HepG2 (cell line): ENCODE measurements at regions of chr11 and their contacts with region 1.

Region 1: DNA sequence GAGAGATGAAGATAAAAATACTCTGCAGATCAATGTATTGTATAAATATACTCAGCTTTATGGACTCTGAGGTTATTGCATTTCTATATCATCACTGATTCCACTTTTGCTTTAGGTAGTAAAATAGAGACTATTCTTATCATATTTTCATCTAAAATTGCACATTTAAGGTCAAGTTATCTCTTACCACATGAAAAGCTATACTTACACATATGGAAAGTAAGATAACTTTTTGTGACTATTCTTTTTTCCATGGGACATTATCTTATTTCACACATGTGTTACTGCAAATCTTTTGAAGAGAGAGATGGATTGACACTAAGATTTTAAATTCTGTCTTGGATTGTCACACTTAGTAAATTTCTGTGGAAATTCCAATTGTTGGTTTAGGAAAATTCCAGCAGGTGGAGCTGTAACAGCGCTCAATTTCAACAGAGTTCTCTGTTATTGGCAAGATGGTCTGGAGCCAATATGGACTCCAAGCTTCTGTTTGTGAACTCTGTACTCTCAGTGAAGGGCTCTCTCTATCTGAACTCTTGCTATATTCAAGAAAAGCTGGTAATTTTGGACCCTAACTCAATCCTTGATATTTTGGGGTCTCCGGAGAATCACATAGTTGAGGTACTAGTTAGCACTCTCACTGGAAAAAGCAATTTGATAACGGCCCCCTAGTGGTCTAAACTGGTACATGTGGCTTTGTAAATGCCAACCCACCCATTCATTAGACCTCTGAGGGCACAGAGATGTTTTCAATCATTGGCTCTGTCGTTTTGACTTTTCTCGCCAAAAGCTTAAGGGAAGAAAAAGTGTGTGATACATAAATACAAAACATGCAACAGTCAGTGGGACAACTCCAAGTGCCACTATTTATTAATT is 429.7 kb downstream of the ETS1 start:
- DNase-seq: peak; percentile 44
- ATAC-seq: peak; percentile 83
- H3K4me3 ChIP-seq: no peak overlapping the region
- H3K27ac ChIP-seq: no peak overlapping the region
- H3K4me1 ChIP-seq: no peaks in the 10 kb centered on the region
- H3K27me3 ChIP-seq: no peaks in the 10 kb centered on the region
- CTCF ChIP-seq: peak; percentile 41
- EP300 ChIP-seq: no peak
- POLR2A ChIP-seq: no peak
- RAD21 ChIP-seq: 0 out of 2 replicates have a peak, but pooled peaks have one; percentile 24

Region 2: DNA sequence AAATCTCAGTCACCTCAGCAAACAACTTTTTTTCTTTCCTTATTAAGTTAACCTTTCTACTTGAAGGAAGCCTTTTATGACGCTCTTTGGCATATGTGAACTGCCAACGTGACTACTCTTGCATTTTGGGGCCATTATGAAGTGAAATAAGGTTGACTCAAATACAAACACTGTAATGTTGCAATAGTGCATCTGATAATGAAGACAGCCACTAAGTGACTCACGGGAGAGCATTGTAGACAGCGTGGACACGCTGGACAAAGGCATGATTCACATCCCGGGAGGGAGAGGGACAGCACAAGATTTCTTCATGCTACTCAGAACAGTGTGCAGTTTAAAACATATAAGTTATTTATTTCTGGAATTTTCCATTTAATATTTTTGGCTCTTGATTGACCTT is 131.1 kb before region 1 on chr11:
- CTCF ChIA-PET with region 1: interaction called, 11 read pairs
- POLR2A ChIA-PET with region 1: no interaction called
- in situ Hi-C with region 1: no loop called
- intact Hi-C with region 1: loop called (anchors 1 kb)
- DNase-seq: no peak
- ATAC-seq: no peak
- H3K4me3 ChIP-seq: no peak overlapping the region
- H3K27ac ChIP-seq: no peak overlapping the region
- H3K4me1 ChIP-seq: no peaks in the 10 kb centered on the region
- H3K27me3 ChIP-seq: no peaks in the 10 kb centered on the region
- CTCF ChIP-seq: no peak
- EP300 ChIP-seq: no peak
- POLR2A ChIP-seq: no peak
- RAD21 ChIP-seq: no peak

Region 3: GRCh38 chr11:128222245-128222884 is 64.7 kb after region 1 on chr11:
- CTCF ChIA-PET with region 1: no interaction called
- POLR2A ChIA-PET with region 1: no interaction called
- in situ Hi-C with region 1: no loop called
- intact Hi-C with region 1: no loop called
- DNase-seq: no peak
- ATAC-seq: no peak
- H3K4me3 ChIP-seq: no peak overlapping the region
- H3K27ac ChIP-seq: no peak overlapping the region
- H3K4me1 ChIP-seq: no peaks in the 10 kb centered on the region
- H3K27me3 ChIP-seq: no peaks in the 10 kb centered on the region
- CTCF ChIP-seq: no peak
- EP300 ChIP-seq: no peak
- POLR2A ChIP-seq: no peak
- RAD21 ChIP-seq: no peak

Region 4: DNA sequence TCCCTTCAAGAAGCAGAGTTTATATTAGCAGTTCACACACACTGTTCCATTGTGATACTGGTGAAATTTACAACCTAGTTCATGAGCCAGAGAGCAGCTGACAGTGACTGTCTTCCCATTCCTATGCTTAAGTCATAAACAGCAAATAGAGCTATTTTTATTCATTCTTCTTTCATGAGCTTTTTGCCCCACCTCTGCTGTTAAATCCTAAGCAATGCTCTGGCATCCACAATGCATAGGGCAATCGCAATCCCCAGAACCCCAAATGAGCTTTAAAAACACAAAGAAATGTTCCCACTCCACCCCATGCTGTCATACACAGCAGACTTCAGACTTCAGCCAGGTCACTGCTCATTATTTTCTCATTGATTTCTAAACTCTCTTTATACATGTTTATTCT is 122.2 kb after region 1 on chr11:
- CTCF ChIA-PET with region 1: no interaction called
- POLR2A ChIA-PET with region 1: no interaction called
- in situ Hi-C with region 1: no loop called
- intact Hi-C with region 1: no loop called
- DNase-seq: no peak
- ATAC-seq: no peak
- H3K4me3 ChIP-seq: no peak overlapping the region
- H3K27ac ChIP-seq: no peak overlapping the region
- H3K4me1 ChIP-seq: no peaks in the 10 kb centered on the region
- H3K27me3 ChIP-seq: no peaks in the 10 kb centered on the region
- CTCF ChIP-seq: no peak
- EP300 ChIP-seq: no peak
- POLR2A ChIP-seq: no peak
- RAD21 ChIP-seq: no peak